Naive thymus-derived CD4-positive, alpha-beta T cell (primary cell): ENCODE measurements at regions of chr9 and their contacts with region 1.

Region 1: GRCh38 chr9:98118640-98119601 is at the start of gene TRIM14:
- DNase-seq: peak; percentile 23 to 79 (median 39)
- ATAC-seq: peak; percentile 64
- H3K4me3 ChIP-seq: peak within 1 kb of the TSS; percentile 78
- H3K4me3 Mint-ChIP-seq: peak within 1 kb of the TSS; percentile 81 to 100 (median 93)
- H3K27ac ChIP-seq: peak within 1 kb of the TSS; percentile 93
- H3K27ac Mint-ChIP-seq: peak within 1 kb of the TSS; percentile 95 to 100 (median 96)
- H3K4me1 ChIP-seq: peaks cover 26 to 39% of the 10 kb centered on the region in 2 donors
- H3K4me1 Mint-ChIP-seq: peaks cover 35 to 70% (median 58%) of the 10 kb centered on the region in 7 donors
- H3K27me3 ChIP-seq: no peaks in the 10 kb centered on the region
- H3K27me3 Mint-ChIP-seq: no peaks in the 10 kb centered on the region
- total RNA-seq, gene TRIM14: 54.1 to 114 (median 79.7) TPM

Region 2: DNA sequence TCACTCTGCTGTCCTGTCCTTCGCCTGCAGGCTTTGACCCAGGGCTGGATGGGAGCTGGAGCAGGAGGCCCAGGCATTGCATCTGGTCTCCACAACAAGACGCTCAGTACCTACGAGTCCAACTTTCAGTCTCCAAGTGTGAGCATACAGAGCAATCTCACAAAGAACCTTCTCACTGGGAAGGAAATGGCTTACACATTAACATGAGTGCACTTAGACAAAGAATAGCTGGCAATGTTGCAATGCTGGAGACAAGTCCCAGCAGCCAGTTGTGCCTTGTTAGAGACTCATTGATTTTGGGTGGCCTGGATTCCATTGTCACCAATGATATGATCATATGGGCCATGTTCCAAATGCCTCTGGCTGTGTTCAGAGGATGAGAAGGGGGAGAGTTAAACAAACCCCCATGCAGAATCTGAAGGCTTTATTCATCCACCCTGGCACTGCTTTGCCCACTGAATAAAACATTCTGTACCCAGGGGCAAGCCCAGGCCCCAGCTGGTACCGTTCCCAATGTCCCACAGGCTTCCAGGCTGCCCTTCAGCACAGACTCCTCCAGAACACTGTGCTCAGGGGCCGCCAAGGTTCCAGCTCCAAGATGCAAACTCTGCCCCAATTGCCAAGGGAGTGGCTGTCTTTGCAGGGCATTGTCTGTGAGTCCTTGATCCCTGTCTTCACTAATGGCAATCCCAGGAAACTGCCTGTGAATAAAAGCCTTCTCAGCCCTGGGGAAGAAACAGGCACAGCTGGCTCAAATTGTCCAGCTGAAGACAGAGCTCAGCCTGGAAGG is 2002.5 kb before region 1 on chr9:
- CTCF ChIA-PET with region 1: no interaction called
- POLR2A ChIA-PET with region 1: no interaction called
- intact Hi-C with region 1: no loop called
- DNase-seq: no peak
- ATAC-seq: no peak
- H3K4me3 ChIP-seq: no peak overlapping the region
- H3K4me3 Mint-ChIP-seq: no peak overlapping the region
- H3K27ac ChIP-seq: no peak overlapping the region
- H3K27ac Mint-ChIP-seq: peak overlapping the region in 1 of 9 donors; percentile 43
- H3K4me1 ChIP-seq: peaks cover 0 to 6% of the 10 kb centered on the region in 2 donors
- H3K4me1 Mint-ChIP-seq: peaks cover 0 to 28% (median 0%) of the 10 kb centered on the region in 7 donors
- H3K27me3 ChIP-seq: no peaks in the 10 kb centered on the region
- H3K27me3 Mint-ChIP-seq: peaks cover 17 to 26% (median 18%) of the 10 kb centered on the region in 5 donors

Region 3: GRCh38 chr9:97803167-97804058 is 315.5 kb before region 1 on chr9:
- CTCF ChIA-PET with region 1: no interaction called
- POLR2A ChIA-PET with region 1: no interaction called
- intact Hi-C with region 1: no loop called
- DNase-seq: peak; percentile 59 to 77 (median 75)
- ATAC-seq: peak; percentile 98
- H3K4me3 ChIP-seq: peak overlapping the region; percentile 72
- H3K4me3 Mint-ChIP-seq: peak overlapping the region; percentile 78 to 92 (median 87)
- H3K27ac ChIP-seq: peak overlapping the region; percentile 45
- H3K27ac Mint-ChIP-seq: peak overlapping the region in 7 of 9 donors; percentile 28 to 86 (median 80)
- H3K4me1 ChIP-seq: no peaks in the 10 kb centered on the region
- H3K4me1 Mint-ChIP-seq: peaks cover 0 to 13% (median 9%) of the 10 kb centered on the region in 7 donors
- H3K27me3 ChIP-seq: no peaks in the 10 kb centered on the region
- H3K27me3 Mint-ChIP-seq: peaks cover 4 to 51% (median 17%) of the 10 kb centered on the region in 5 donors

Region 4: DNA sequence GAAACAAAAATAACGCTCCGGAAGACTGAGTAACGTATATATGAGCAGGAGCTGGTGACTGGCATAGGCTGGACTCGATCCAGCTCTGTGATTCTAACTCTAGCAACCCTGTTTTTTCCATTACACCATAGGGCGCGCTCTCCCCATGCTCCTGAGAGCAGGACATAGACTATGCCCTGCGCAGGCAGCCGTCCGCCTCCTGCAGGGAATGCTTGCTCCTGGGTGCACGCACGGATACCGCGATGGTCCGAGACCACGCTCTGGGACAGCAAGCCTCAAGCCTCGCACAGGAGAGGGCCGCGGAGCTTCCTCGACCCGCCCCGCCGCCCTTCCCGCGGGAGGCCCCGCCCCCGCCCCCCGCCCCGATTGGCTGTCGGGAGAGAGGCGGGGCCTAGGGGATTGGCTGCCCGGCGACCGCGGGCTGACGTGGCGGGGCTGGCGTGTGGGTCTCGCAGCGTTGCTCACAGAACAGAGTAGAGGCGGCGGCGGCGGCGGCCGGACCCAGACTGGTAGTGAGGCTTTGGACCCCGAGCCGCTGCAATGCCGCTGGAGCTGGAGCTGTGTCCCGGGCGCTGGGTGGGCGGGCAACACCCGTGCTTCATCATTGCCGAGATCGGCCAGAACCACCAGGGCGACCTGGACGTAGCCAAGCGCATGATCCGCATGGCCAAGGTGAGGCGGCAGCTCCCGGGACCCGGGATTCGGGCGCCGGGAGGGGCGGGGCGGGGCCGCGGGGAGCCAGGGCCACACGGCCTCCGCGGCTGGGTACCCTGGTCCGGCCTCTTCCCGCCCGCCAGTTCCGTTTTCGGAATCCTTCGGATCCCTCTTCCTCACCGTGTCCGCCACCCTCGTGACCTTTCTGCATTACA is 62.4 kb before region 1 on chr9 and contains the start of gene NANS:
- CTCF ChIA-PET with region 1: interaction called, 4 read pairs
- POLR2A ChIA-PET with region 1: interaction called, 3 read pairs
- intact Hi-C with region 1: loop called in 1 of 2 experiments (anchors 1 kb)
- DNase-seq: peak; percentile 84 to 93 (median 91)
- ATAC-seq: peak; percentile 99
- H3K4me3 ChIP-seq: peak within 1 kb of the TSS; percentile 73
- H3K4me3 Mint-ChIP-seq: peak within 1 kb of the TSS; percentile 93 to 100 (median 95)
- H3K27ac ChIP-seq: peak within 1 kb of the TSS; percentile 93
- H3K27ac Mint-ChIP-seq: peak within 1 kb of the TSS; percentile 93 to 100 (median 97)
- H3K4me1 ChIP-seq: peaks cover 9 to 22% of the 10 kb centered on the region in 2 donors
- H3K4me1 Mint-ChIP-seq: peaks cover 6 to 40% (median 27%) of the 10 kb centered on the region in 7 donors
- H3K27me3 ChIP-seq: no peaks in the 10 kb centered on the region
- H3K27me3 Mint-ChIP-seq: no peaks in the 10 kb centered on the region
- total RNA-seq, gene NANS: 16.3 to 58.9 (median 51.8) TPM

Region 5: DNA sequence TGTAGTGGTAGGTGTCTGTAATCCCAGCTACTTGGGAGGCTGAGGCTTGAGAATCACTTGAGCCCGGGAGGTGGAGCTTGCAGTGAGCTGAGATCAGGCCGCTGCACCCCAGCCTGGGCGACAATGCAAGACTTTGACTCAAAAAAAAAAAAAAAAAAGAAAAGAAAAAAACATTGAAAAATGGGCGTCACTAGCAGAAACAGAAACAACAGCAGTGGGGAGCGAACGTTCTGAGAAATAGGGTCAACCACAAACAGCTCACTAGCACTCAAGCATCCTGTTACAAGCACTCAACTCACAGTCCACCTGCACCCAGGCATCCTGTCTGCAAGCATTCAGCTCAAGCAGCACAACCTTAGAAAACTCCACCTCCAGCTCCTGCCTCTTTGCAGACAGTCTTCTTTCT is 17.1 kb before region 1 on chr9:
- CTCF ChIA-PET with region 1: interaction called, 21 read pairs
- POLR2A ChIA-PET with region 1: interaction called, 80 read pairs
- intact Hi-C with region 1: loop called (anchors 1 kb)
- DNase-seq: peak; percentile 35 to 96 (median 92)
- ATAC-seq: peak; percentile 99
- H3K4me3 ChIP-seq: peak overlapping the region; percentile 31
- H3K4me3 Mint-ChIP-seq: peak overlapping the region; percentile 66 to 86 (median 77)
- H3K27ac ChIP-seq: peak overlapping the region; percentile 78
- H3K27ac Mint-ChIP-seq: peak overlapping the region; percentile 87 to 99 (median 95)
- H3K4me1 ChIP-seq: peaks cover 88 to 91% of the 10 kb centered on the region in 2 donors
- H3K4me1 Mint-ChIP-seq: peaks cover 52 to 97% (median 88%) of the 10 kb centered on the region in 7 donors
- H3K27me3 ChIP-seq: no peaks in the 10 kb centered on the region
- H3K27me3 Mint-ChIP-seq: no peaks in the 10 kb centered on the region

Region 6: GRCh38 chr9:98192503-98193335 is 73.8 kb after region 1 on chr9 and contains the start of gene CORO2A:
- CTCF ChIA-PET with region 1: interaction called, 6 read pairs
- POLR2A ChIA-PET with region 1: interaction called, 10 read pairs
- intact Hi-C with region 1: loop called (anchors 1 to 2 kb)
- DNase-seq: peak; percentile 37 to 85 (median 47)
- ATAC-seq: peak; percentile 86
- H3K4me3 ChIP-seq: peak within 1 kb of the TSS; percentile 81
- H3K4me3 Mint-ChIP-seq: peak within 1 kb of the TSS; percentile 76 to 92 (median 86)
- H3K27ac ChIP-seq: peak within 1 kb of the TSS; percentile 53
- H3K27ac Mint-ChIP-seq: peak within 1 kb of the TSS; percentile 19 to 90 (median 83)
- H3K4me1 ChIP-seq: peaks cover 17 to 22% of the 10 kb centered on the region in 2 donors
- H3K4me1 Mint-ChIP-seq: peaks cover 12 to 46% (median 41%) of the 10 kb centered on the region in 7 donors
- H3K27me3 ChIP-seq: no peaks in the 10 kb centered on the region
- H3K27me3 Mint-ChIP-seq: peaks cover 0 to 17% (median 0%) of the 10 kb centered on the region in 5 donors
- total RNA-seq, gene CORO2A: 3.0 to 9.7 (median 7.7) TPM

Region 7: DNA sequence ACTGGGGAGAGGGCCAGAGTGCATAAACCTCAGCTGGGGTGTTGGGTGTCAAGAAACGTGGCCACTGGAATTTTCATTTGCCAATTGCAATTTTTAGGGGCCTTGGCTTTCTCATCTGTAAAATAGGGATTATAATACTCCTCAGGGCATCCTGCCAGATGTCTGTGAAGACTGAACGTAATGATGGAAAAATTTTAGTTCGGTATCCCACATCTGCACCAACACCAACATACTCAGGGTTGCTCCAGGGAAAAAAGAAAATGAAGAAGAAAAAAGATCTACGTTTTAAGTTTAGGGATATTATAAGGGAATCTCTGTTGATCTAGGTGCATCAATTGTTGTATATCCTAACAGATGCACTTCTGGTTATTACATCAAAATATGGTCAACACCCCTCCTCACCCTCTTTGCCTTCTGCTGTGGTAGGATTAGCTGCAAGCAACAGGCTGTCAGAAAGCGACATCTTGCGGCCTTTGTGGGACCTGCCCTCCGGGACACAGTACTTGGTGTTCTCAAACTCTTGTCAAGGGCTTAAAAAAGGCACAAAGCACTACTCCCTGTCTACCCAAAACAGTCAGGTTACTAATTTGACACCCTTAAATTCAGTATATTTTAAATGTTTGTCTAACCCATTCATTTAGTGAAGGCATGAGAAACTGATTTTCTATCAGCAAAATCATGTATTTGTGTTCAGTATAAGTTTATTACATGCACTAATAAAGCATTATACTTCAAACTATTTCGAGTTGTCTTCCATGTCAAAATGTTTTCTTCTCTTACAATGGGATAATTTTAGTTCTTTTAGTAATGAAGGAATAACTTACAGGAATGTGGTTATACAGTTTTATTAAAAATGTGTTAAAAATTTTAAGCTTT is 144.8 kb after region 1 on chr9:
- CTCF ChIA-PET with region 1: interaction called, 7 read pairs
- POLR2A ChIA-PET with region 1: interaction called, 70 read pairs
- intact Hi-C with region 1: loop called in 1 of 2 experiments (anchors 1 kb)
- DNase-seq: peak; percentile 54 to 82 (median 77)
- ATAC-seq: peak; percentile 100
- H3K4me3 ChIP-seq: no peak overlapping the region
- H3K4me3 Mint-ChIP-seq: no peak overlapping the region
- H3K27ac ChIP-seq: no peak overlapping the region
- H3K27ac Mint-ChIP-seq: peak overlapping the region in 1 of 9 donors; percentile 59
- H3K4me1 ChIP-seq: no peaks in the 10 kb centered on the region
- H3K4me1 Mint-ChIP-seq: peaks cover 0 to 3% (median 0%) of the 10 kb centered on the region in 7 donors
- H3K27me3 ChIP-seq: no peaks in the 10 kb centered on the region
- H3K27me3 Mint-ChIP-seq: peaks cover 0 to 23% (median 0%) of the 10 kb centered on the region in 5 donors